HEK293 (cell line): ENCODE measurements at regions of chr2 and their contacts with region 1.

Region 1: GRCh38 chr2:163182764-163183354 is 344.3 kb upstream of the KCNH7 start:
- H3K4me3 ChIP-seq: no peak overlapping the region
- H3K27ac ChIP-seq: no peak overlapping the region
- H3K4me1 ChIP-seq: no peaks in the 10 kb centered on the region
- CTCF ChIP-seq: 0 out of 2 replicates have a peak, but pooled peaks have one; percentile 18

Region 2: DNA sequence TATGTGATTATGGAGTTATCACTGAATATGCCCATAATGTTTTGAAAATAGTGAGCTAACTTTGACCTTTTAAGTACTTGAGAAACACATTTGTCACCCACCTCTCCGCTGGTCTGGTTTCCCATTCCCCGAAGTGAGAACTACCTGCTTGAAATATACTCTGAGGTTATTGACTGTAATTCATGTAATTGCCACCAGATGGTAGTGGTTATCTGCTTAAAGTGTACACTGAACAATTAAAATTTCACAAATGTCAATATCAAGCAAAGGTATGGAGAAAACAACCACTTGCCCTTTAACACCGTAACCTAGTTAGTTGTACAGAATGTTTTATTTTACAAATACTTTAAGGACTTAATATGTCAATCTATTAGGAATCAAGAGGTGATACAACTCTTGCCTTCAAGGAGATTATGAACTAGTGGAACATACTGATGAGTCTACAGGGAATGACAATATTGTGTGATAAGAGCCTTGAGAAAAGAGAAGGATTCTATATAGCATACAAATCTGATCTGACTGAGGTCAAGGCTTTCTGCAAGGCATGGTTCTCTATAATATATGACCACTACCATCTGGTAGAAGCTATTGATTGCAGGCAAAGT is 27.5 kb before region 1 on chr2:
- CTCF ChIA-PET with region 1: interaction called, 11 read pairs
- POLR2A ChIA-PET with region 1: no interaction called
- H3K4me3 ChIP-seq: no peak overlapping the region
- H3K27ac ChIP-seq: no peak overlapping the region
- H3K4me1 ChIP-seq: no peaks in the 10 kb centered on the region
- CTCF ChIP-seq: 0 out of 2 replicates have a peak, but pooled peaks have one; percentile 24